ENCODE measurements at regions of chr10 and their contacts with region 1.

Region 1: DNA sequence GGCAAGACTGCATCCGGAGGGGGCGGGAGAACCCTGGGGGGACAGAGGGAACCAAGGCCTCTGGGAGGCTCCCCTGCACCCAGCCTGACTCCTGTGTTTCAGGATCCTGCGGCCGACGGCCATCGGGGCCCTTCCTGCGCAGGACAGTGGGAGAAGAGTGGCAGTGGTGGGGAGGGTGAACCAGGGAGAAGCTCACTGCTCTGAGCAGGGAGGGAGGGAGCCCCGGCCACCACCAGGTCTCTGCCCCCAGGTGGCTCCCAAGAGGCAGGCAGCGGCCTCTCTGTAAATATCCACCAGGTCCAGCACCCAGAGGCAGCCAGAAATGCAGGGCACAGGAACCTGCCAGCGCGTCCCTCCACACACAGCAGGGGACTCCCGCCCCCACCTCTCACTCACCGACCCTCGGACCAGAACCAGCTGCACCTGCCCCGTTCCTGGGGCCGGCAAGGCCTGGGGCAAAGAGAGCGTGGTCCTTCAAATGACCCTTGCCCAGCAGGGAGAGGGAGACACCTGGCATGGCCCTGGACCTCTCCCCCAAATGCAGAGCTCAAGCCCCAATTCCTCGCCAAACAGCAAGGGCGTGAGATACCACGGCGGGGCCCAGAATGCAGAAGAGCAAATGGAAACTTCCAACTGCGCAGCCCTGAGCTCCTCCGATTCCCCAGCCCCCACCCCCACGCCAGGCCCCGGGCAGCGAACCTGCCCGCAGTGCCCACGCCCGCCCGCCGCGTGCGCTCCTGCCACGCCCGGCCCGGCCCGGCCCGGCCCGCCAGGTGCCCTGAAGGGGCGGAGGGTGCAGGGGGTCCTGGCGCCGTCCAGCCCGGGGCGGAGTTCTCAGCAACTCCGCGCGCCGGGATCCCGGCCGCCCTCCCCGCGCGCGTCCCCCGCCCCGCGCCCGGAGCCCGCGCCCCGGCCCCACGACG is 805 bp downstream of the RASGEF1A start:
- DNase-seq: peak; percentile 28 to 71 (median 44)
- ATAC-seq: peak; percentile 81
- H3K4me3 ChIP-seq: peak overlapping the region; percentile 53
- H3K4me3 Mint-ChIP-seq: peak overlapping the region; percentile 89
- H3K27ac ChIP-seq: no peak overlapping the region
- H3K27ac Mint-ChIP-seq: peak overlapping the region; percentile 47
- H3K4me1 ChIP-seq: peaks cover 19% of the 10 kb centered on the region
- H3K4me1 Mint-ChIP-seq: peaks cover 5% of the 10 kb centered on the region
- H3K27me3 ChIP-seq: peaks cover 22 to 42% of the 10 kb centered on the region in 2 experiments
- H3K27me3 Mint-ChIP-seq: peaks cover 58% of the 10 kb centered on the region
- CTCF ChIP-seq: no peak

Region 2: GRCh38 chr10:43237631-43238446 is 28.2 kb before region 1 on chr10:
- CTCF ChIA-PET with region 1: no interaction called
- POLR2A ChIA-PET with region 1: no interaction called
- intact Hi-C with region 1: loop called in 1 of 2 experiments (anchors 1 kb)
- DNase-seq: peak in 2 of 14 experiments; percentile 7 to 23
- ATAC-seq: no peak
- H3K4me3 ChIP-seq: no peak overlapping the region
- H3K4me3 Mint-ChIP-seq: no peak overlapping the region
- H3K27ac ChIP-seq: no peak overlapping the region
- H3K27ac Mint-ChIP-seq: no peak overlapping the region
- H3K4me1 ChIP-seq: no peaks in the 10 kb centered on the region
- H3K4me1 Mint-ChIP-seq: no peaks in the 10 kb centered on the region
- H3K27me3 ChIP-seq: peaks cover 0 to 2% of the 10 kb centered on the region in 2 experiments
- H3K27me3 Mint-ChIP-seq: peaks cover 19% of the 10 kb centered on the region
- CTCF ChIP-seq: no peak

Region 3: GRCh38 chr10:43415544-43415943 is 149.5 kb after region 1 on chr10:
- CTCF ChIA-PET with region 1: no interaction called
- POLR2A ChIA-PET with region 1: no interaction called
- intact Hi-C with region 1: no loop called
- DNase-seq: no peak
- ATAC-seq: no peak
- H3K4me3 ChIP-seq: no peak overlapping the region
- H3K4me3 Mint-ChIP-seq: peak overlapping the region; percentile 7
- H3K27ac ChIP-seq: no peak overlapping the region
- H3K27ac Mint-ChIP-seq: no peak overlapping the region
- H3K4me1 ChIP-seq: peaks cover 29% of the 10 kb centered on the region
- H3K4me1 Mint-ChIP-seq: peaks cover 24% of the 10 kb centered on the region
- H3K27me3 ChIP-seq: no peaks in the 10 kb centered on the region
- H3K27me3 Mint-ChIP-seq: no peaks in the 10 kb centered on the region
- CTCF ChIP-seq: no peak

Measured in CD4-positive, alpha-beta T cell (primary cell).